Activated CD4-positive, alpha-beta memory T cell treated with anti-CD3 and anti-CD28 coated beads, Interleukin-2, amount 10 ng/mL, durations not matched to agents 7 days and 5 days (primary cell): ENCODE measurements at regions of chr18 and their contacts with region 1.

Region 1: DNA sequence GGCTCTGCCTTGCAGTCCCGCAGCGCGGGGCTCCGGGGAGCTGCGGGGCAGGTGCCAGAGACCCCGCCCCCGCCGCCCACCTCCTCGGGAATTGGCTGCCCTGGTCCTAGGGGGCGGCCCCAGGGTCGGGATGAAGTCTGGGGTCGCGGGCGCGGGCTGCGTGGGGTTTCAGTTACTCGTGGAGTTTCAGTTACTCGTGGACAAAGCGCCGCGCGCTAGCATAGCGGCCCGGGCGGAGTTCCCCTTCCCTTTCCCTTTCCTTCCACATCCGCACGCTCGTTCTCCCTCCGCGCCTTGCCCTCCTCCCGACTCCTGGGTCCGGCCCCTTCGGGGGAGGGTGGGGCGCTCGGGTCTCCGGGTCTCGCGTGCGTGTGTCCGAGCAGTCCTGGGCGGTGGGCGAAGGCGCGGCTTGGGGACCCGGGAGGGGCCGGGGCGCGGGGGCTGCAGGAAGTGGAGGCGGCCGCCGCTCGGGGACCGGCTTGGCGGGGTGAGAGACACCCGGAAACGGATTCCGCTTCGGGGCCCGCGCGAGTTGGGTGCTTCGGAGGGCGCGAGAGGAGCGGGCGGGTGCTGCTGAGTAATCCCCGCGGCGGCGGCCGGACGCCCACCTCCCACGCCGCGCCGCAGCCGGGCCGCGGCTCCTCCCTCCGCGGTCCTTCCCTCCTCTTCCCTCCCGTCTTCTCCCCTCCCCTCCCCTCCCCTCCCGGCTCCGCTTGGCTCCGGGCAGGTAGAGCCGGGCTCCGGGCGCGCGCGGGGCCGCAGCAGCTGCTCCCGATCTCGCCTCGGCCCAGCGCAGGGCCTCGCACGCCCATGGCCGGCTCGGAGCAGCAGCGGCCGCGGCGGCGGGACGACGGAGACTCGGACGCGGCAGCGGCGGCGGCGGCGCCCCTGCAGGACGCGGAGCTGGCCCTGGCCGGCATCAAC is at the start of gene TTC39C:
- DNase-seq: peak; percentile 87
- H3K4me3 Mint-ChIP-seq: peak within 1 kb of the TSS; percentile 88
- H3K27ac Mint-ChIP-seq: peak within 1 kb of the TSS; percentile 83
- H3K4me1 Mint-ChIP-seq: peaks cover 73% of the 10 kb centered on the region
- H3K27me3 Mint-ChIP-seq: no peaks in the 10 kb centered on the region
- total RNA-seq, gene TTC39C: 94.0 to 94.4 TPM

Region 2: GRCh38 chr18:23926571-23926970 is 87.8 kb before region 1 on chr18:
- CTCF ChIA-PET with region 1: interaction called, 4 read pairs
- POLR2A ChIA-PET with region 1: interaction called, 15 read pairs
- DNase-seq: no peak
- H3K4me3 Mint-ChIP-seq: no peak overlapping the region
- H3K27ac Mint-ChIP-seq: no peak overlapping the region
- H3K4me1 Mint-ChIP-seq: peaks cover 33% of the 10 kb centered on the region
- H3K27me3 Mint-ChIP-seq: no peaks in the 10 kb centered on the region

Region 3: DNA sequence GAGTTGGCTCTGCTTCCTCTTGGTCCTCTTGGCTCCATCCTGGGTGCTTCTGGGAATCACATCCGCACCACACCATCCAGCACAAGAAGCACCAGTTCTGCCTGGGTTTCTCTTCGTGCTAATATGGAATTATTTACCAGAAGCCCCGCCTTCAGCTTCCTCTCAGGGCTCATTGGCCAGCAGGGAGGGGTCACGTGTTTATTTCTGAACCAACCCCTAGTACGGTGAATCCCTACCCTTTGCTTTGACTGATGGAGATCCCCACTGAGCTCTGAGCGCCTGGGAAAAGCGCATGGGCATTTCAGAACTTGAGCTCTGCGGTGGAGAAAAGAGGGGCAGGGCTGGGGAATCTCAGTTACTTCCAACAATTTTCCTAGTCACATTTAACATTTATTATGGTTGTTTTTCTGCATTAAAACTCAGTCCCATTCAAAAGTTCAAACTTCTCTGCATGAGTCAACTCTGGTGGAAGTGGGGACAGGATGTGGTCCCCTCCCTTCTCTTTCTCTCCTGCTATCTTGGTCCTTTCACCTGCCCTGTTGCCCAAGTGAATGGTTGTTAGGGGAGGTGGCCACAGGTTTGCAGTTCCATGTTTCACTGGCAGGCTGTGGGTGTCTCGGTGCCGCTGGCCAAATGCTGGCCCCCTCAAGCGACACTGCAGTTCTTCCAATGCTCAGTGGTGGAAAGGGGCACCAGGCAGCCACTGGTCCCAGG is 76.1 kb before region 1 on chr18:
- CTCF ChIA-PET with region 1: no interaction called
- POLR2A ChIA-PET with region 1: interaction called, 14 read pairs
- DNase-seq: peak; percentile 61
- H3K4me3 Mint-ChIP-seq: no peak overlapping the region
- H3K27ac Mint-ChIP-seq: peak overlapping the region; percentile 61
- H3K4me1 Mint-ChIP-seq: peaks cover 66% of the 10 kb centered on the region
- H3K27me3 Mint-ChIP-seq: peaks cover 33% of the 10 kb centered on the region

Region 4: DNA sequence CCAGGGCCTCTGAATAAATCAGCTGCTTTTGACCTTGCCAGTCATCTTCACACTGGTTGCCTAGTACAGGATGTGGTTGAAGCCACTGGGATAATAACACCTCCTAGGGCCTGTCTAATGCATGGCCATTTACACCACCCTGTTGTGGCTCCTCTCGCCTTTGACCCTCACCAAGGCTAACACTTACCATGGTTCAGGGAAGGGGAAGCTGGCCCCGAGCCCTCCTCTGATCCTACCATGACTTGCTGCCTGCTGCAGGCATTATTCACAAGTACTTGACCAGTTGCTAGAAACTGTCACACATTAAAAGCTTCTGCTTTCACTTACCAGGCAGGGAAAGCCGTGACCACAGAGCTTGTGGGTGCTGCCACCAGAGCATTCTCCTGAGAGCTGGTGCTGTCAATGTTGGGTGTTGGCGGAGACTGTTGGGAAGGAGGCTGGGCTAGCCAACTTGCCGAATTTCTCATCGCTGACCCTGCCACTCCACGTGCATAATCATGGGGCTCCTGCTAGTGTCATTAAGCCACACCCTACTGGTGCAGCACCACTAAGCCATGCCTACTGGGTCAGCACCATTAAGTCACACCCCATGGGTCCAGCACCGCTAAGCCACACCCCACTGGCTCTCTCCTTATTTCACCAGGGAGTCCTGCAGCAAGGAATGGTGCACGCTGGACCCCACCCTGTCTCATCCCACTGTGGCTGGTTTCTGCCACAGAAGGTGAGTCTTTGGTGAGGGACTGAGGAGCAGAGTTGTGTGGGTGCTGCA is 46.8 kb before region 1 on chr18:
- CTCF ChIA-PET with region 1: interaction called, 3 read pairs
- POLR2A ChIA-PET with region 1: interaction called, 37 read pairs
- DNase-seq: peak; percentile 61
- H3K4me3 Mint-ChIP-seq: no peak overlapping the region
- H3K27ac Mint-ChIP-seq: peak overlapping the region; percentile 2
- H3K4me1 Mint-ChIP-seq: peaks cover 66% of the 10 kb centered on the region
- H3K27me3 Mint-ChIP-seq: peaks cover 12% of the 10 kb centered on the region

Region 5: DNA sequence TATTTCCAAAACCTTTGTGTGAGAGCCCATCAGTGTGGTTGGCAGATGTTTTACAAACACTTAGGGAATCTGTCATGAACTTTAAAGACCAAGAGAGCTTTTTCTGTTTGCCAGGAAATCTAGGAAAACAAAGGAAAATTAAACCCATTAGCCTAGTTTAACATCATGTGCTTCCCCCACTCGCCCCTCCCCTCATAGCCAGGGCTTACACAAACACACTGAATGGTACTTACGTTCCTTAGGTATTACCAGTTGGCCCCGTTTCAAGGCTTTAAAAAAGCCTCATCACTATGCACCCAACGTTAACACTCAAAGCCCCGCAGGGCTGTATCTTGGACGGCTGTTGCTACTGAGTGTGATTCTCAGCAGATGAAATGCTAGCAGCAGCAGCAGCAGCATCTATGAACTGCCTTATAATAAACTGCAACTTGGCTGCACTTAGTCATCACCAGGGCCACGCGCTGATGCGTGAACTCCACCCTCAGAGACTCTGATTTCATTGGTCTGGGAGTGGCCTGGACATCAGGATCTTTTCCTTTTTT is 19.9 kb before region 1 on chr18:
- CTCF ChIA-PET with region 1: no interaction called
- POLR2A ChIA-PET with region 1: interaction called, 86 read pairs
- DNase-seq: no peak
- H3K4me3 Mint-ChIP-seq: peak overlapping the region; percentile 59
- H3K27ac Mint-ChIP-seq: peak overlapping the region; percentile 64
- H3K4me1 Mint-ChIP-seq: peaks cover 65% of the 10 kb centered on the region
- H3K27me3 Mint-ChIP-seq: peaks cover 2% of the 10 kb centered on the region

Region 6: DNA sequence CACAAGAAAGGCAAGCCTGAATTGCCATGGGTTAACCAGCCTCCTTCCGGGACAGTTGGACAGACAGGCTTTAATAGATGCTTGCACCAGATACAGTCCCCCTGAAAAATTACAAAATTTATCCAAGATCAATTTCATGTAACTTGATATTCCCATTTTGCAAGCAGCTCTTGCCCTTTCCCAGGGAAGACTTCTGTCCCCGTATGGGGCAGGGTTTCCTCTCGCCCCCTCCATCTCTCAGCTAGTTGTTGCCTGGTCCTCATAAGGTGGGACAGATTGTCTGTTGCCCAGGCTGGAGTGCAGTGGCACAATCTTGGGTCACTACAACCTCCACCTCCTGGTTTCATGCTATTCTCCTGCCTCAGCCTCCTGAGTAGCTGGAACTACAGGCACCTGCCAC is 61.4 kb after region 1 on chr18:
- CTCF ChIA-PET with region 1: no interaction called
- POLR2A ChIA-PET with region 1: interaction called, 12 read pairs
- DNase-seq: no peak
- H3K4me3 Mint-ChIP-seq: no peak overlapping the region
- H3K27ac Mint-ChIP-seq: peak overlapping the region; percentile 60
- H3K4me1 Mint-ChIP-seq: peaks cover 56% of the 10 kb centered on the region
- H3K27me3 Mint-ChIP-seq: no peaks in the 10 kb centered on the region

Region 7: GRCh38 chr18:24103320-24104021 is 89.1 kb after region 1 on chr18:
- CTCF ChIA-PET with region 1: no interaction called
- POLR2A ChIA-PET with region 1: no interaction called
- DNase-seq: no peak
- H3K4me3 Mint-ChIP-seq: no peak overlapping the region
- H3K27ac Mint-ChIP-seq: no peak overlapping the region
- H3K4me1 Mint-ChIP-seq: no peaks in the 10 kb centered on the region
- H3K27me3 Mint-ChIP-seq: no peaks in the 10 kb centered on the region